WTC11 (cell line): ENCODE measurements at regions of chr1 and their contacts with region 1.

Region 1: GRCh38 chr1:70745199-70745598 is 302.4 kb downstream of the PTGER3 start:
- DNase-seq: peak; percentile 27
- ATAC-seq: peak; percentile 94
- H3K4me3 Mint-ChIP-seq: no peak overlapping the region
- H3K27ac Mint-ChIP-seq: no peak overlapping the region
- H3K4me1 Mint-ChIP-seq: no peaks in the 10 kb centered on the region
- H3K27me3 Mint-ChIP-seq: peaks cover 5% of the 10 kb centered on the region; the same call in 1 of the 2 replicates
- CTCF ChIP-seq: peak; percentile 39; the same call in 1 of the 2 replicates

Region 2: GRCh38 chr1:70706381-70707037 is 38.7 kb before region 1 on chr1:
- CTCF ChIA-PET with region 1: no interaction called
- POLR2A ChIA-PET with region 1: no interaction called
- DNase-seq: peak; percentile 54
- ATAC-seq: peak; percentile 94
- H3K4me3 Mint-ChIP-seq: peak overlapping the region; percentile 80
- H3K27ac Mint-ChIP-seq: peak overlapping the region; percentile 52; the same call in 1 of the 2 replicates
- H3K4me1 Mint-ChIP-seq: peaks cover 11% of the 10 kb centered on the region
- H3K27me3 Mint-ChIP-seq: peaks cover 3% of the 10 kb centered on the region; the same call in 1 of the 2 replicates
- CTCF ChIP-seq: no peak

Region 3: GRCh38 chr1:71049951-71050598 is 304.9 kb after region 1 on chr1:
- CTCF ChIA-PET with region 1: interaction called, 10 read pairs
- POLR2A ChIA-PET with region 1: no interaction called
- DNase-seq: no peak
- ATAC-seq: peak; percentile 31
- H3K4me3 Mint-ChIP-seq: no peak overlapping the region
- H3K27ac Mint-ChIP-seq: no peak overlapping the region
- H3K4me1 Mint-ChIP-seq: peaks cover 9% of the 10 kb centered on the region; the same call in 1 of the 2 replicates
- H3K27me3 Mint-ChIP-seq: peaks cover 46% of the 10 kb centered on the region
- CTCF ChIP-seq: peak; percentile 41; the same call in 1 of the 2 replicates